ENCODE measurements at regions of chr9 and their contacts with region 1.

Region 1: GRCh38 chr9:130461218-130461630 is 16.5 kb downstream of the ASS1 start:
- DNase-seq: peak in 5 of 10 donors; percentile 50 to 78 (median 68)
- H3K4me3 ChIP-seq: peak overlapping the region in 24 of 59 donors; percentile 3 to 49 (median 32)
- H3K27ac ChIP-seq: no peak overlapping the region
- H3K27me3 ChIP-seq: peaks cover 0 to 14% (median 0%) of the 10 kb centered on the region in 45 donors
- CTCF ChIP-seq: peak; percentile 77 to 99 (median 96)

Region 2: GRCh38 chr9:130682490-130683121 is 221.4 kb after region 1 on chr9:
- intact Hi-C with region 1: loop called (anchors 1 kb)
- DNase-seq: peak; percentile 75 to 90 (median 82)
- H3K4me3 ChIP-seq: peak overlapping the region; percentile 26 to 81 (median 68)
- H3K27ac ChIP-seq: peak overlapping the region in 32 of 59 donors; percentile 39 to 92 (median 82)
- H3K27me3 ChIP-seq: no peaks in the 10 kb centered on the region
- CTCF ChIP-seq: peak; percentile 76 to 98 (median 91)

Region 3: DNA sequence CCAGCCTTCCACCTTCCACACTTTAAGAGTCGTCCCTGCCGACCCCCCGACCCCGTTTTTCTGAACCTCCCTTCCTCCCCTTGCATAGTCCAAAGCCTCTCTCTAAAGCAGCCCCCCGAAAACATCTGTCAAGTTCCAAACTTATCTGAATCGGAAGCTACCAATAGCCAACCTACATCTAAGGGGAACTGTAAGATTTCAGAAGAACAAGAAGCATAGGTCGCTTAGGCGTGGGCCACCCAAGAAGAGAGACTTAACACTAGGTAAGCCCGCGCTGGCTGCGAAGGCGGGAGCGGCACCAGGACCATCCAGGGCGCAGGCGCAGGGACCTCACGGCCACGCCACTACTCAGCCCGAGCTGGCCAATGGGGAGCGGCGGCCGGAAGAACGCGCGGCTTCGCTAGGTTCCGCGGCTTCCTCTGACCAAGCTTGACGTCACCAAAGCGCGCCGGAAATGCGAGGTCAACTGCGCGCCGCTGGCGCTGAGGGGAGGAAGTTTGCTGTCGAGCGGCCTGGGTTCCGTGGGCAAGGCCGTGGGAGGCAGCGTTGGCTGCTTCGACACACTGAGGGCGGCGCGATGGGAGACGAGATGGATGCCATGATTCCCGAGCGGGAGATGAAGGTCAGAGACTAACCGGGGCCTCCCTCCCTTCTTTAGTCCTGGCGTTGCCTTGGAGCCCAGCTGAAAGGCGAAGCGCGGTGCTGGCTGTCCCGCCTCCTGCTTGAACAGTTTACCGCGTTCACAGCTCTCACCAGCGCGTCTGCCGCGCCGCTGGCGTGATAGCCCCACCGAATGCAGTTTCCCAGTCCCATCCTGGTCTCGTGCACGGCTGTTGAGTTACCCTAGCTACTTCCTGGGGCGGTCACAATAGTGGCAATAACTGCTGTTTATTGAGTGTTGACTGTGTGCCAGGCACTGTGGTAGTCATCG is 664.2 kb after region 1 on chr9 and contains the start of gene NUP214:
- intact Hi-C with region 1: loop called in 1 of 2 experiments (anchors 5 kb)
- DNase-seq: peak; percentile 98 to 100 (median 99)
- H3K4me3 ChIP-seq: peak within 1 kb of the TSS; percentile 63 to 100 (median 96)
- H3K27ac ChIP-seq: peak within 1 kb of the TSS in 58 of 59 donors; percentile 17 to 94 (median 81)
- H3K27me3 ChIP-seq: no peaks in the 10 kb centered on the region
- CTCF ChIP-seq: peak in 33 of 56 donors; percentile 5 to 60 (median 35)
- total RNA-seq, gene NUP214: 37.9 to 85.0 (median 52.8) TPM